Transverse colon (tissue), 4 donors: ENCODE measurements at regions of chr5 and their contacts with region 1.

Region 1: DNA sequence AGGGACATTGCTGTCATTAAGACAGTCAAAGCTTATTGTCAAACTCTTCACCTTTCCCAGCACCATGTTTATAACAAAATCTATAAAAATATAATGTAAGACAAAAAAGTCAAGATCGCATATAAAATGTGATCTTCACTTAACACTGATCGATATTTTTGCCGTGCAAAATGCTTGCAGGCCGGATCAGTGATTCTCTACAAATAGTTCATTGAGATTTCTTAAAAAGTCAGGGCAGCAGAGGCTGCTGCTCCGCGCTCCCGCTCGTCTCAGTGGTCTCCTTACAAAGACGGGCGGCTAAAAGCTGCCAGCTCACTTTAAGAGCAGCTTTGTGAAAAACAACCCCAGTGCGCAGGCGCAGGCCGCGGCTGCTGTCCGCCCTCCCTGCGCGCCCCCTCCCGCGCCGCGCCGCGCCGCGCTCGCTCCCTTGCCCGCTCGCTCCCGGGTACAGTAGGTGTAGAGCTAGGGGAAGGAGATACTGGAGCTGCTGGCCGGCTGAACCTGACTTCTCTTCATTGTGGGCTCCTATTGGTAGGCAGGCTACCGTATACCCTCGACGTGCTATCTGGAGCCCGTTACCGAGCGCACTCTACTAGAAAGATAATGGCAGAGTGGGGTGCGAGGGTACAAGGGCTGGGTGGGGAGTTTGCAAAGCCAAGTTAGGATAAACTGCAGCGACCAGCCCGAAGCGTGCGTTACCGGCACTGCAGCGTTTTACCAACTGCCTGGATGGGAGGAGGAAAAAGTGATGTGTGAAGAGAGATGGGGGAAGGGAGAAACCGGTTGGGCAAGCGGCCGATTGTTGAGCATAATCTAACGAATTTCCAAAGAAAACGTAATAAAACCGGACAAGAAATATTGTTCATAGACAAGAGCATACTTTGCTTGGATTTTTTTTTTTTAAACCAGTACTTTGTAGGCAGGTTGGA is at the start of gene ARRDC3:
- DNase-seq: peak; percentile 97
- H3K4me3 ChIP-seq: peak within 1 kb of the TSS; percentile 68 to 92 (median 75)
- H3K27ac ChIP-seq: peak within 1 kb of the TSS; percentile 97 to 99 (median 98)
- H3K4me1 ChIP-seq: peaks cover 5 to 23% (median 18%) of the 10 kb centered on the region in 4 donors
- H3K27me3 ChIP-seq: no peaks in the 10 kb centered on the region
- CTCF ChIP-seq: peak in 1 of 5 experiments; percentile 21
- EP300 ChIP-seq: peak; percentile 33
- POLR2A ChIP-seq: peak; percentile 99
- total RNA-seq, gene ARRDC3: 13.7 to 29.4 (median 27.5) TPM

Region 2: GRCh38 chr5:91101600-91102379 is 281.5 kb before region 1 on chr5:
- in situ Hi-C with region 1: loop called (anchors 5 to 25 kb)
- intact Hi-C with region 1: loop called (anchors 2 kb)
- DNase-seq: peak; percentile 75
- H3K4me3 ChIP-seq: no peak overlapping the region
- H3K27ac ChIP-seq: peak overlapping the region in 1 of 4 donors; percentile 20
- H3K4me1 ChIP-seq: peaks cover 0 to 28% (median 7%) of the 10 kb centered on the region in 4 donors
- H3K27me3 ChIP-seq: no peaks in the 10 kb centered on the region
- CTCF ChIP-seq: peak; percentile 73 to 92 (median 77)
- EP300 ChIP-seq: no peak
- POLR2A ChIP-seq: no peak

Region 3: DNA sequence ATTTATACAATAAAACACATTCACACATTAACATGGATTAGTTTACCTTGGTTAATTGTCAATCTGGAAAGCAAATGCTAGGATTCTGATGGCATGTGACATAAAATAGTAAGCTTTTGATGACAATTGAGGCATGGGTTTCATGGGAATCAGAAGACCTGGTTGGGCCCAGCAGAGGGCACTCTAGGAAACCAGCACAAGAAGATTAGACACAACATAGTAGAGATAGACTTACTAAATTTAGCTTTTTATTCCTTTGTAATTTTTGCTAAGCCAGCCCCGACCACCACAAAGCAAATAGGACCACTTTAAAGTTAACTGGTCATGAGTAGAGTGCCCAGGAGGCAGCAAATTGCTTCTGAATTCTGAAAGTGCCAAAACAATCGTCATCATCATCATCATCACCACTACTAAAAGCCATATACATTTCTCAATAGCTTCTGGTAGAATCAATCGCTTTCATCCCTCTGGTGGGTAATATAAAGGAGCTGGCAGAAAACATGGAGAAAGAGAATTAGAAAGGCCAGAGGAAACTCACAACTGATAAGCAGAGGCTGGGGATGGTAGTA is 163.4 kb before region 1 on chr5:
- in situ Hi-C with region 1: loop called in 3 of 4 experiments (anchors 10 to 25 kb)
- intact Hi-C with region 1: loop called (anchors 5 kb)
- DNase-seq: no peak
- H3K4me3 ChIP-seq: no peak overlapping the region
- H3K27ac ChIP-seq: peak overlapping the region in 1 of 4 donors; percentile 44
- H3K4me1 ChIP-seq: peaks cover 0 to 14% (median 4%) of the 10 kb centered on the region in 4 donors
- H3K27me3 ChIP-seq: no peaks in the 10 kb centered on the region
- CTCF ChIP-seq: peak in 1 of 5 experiments; percentile 17
- EP300 ChIP-seq: no peak
- POLR2A ChIP-seq: no peak

Region 4: DNA sequence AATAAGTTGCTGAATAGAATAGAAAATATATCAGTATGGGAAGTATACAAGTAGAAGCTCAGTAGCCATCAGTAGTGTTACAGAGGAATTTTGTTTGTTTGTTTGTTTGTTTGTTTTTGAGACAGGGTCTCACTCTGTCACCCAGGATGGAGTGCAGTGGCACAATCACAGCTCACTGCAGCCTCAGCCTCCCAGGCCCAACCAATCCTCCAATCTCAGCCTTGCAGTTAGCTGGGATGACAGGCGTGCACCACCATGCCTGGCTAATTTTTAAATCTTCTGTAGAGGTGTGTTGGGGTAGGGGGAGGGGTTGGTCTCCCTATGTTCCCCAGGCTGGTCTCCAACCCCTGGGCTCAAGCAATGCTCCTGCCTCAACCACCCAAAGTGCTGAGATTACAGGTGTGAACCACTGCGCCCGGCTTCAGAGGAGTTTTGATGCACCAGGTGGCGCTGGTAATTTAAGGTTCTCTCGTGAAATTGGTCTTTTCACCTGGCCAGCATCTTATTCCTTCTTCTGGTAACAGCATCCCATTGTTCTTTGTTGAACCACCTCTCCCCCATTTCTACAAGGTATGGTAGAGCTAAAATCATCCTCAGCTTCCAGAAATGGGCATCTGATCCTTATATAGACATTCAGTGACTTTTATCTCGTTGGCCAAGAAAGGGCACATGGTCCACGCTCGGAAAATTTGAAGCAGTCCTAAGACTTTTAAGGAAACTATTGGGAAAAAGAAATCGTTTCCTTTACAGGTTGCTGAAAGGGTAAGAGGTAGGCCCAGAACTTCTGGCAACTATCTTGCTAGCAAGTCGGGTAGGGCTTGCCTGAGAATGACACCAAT is 157.2 kb before region 1 on chr5:
- in situ Hi-C with region 1: loop called in 3 of 4 experiments (anchors 10 to 25 kb)
- intact Hi-C with region 1: loop called (anchors 5 kb)
- DNase-seq: peak; percentile 53
- H3K4me3 ChIP-seq: no peak overlapping the region
- H3K27ac ChIP-seq: no peak overlapping the region
- H3K4me1 ChIP-seq: no peaks in the 10 kb centered on the region
- H3K27me3 ChIP-seq: no peaks in the 10 kb centered on the region
- CTCF ChIP-seq: peak in 4 of 5 experiments; percentile 19 to 43 (median 41)
- EP300 ChIP-seq: no peak
- POLR2A ChIP-seq: no peak

Region 5: GRCh38 chr5:91280362-91281269 is 102.7 kb before region 1 on chr5:
- in situ Hi-C with region 1: loop called in 1 of 4 experiments (anchors 10 kb)
- intact Hi-C with region 1: no loop called
- DNase-seq: peak; percentile 92
- H3K4me3 ChIP-seq: peak overlapping the region; percentile 41 to 66 (median 46)
- H3K27ac ChIP-seq: peak overlapping the region; percentile 84 to 94 (median 90)
- H3K4me1 ChIP-seq: peaks cover 4 to 21% (median 12%) of the 10 kb centered on the region in 4 donors
- H3K27me3 ChIP-seq: no peaks in the 10 kb centered on the region
- CTCF ChIP-seq: no peak
- EP300 ChIP-seq: peak; percentile 75
- POLR2A ChIP-seq: peak; percentile 74

Region 6: GRCh38 chr5:91311697-91312501 is 71.4 kb before region 1 on chr5:
- in situ Hi-C with region 1: no loop called
- intact Hi-C with region 1: loop called (anchors 5 kb)
- DNase-seq: peak; percentile 61
- H3K4me3 ChIP-seq: no peak overlapping the region
- H3K27ac ChIP-seq: peak overlapping the region; percentile 70 to 84 (median 74)
- H3K4me1 ChIP-seq: peaks cover 10 to 37% (median 24%) of the 10 kb centered on the region in 4 donors
- H3K27me3 ChIP-seq: no peaks in the 10 kb centered on the region
- CTCF ChIP-seq: peak in 1 of 5 experiments; percentile 3
- EP300 ChIP-seq: peak; percentile 18
- POLR2A ChIP-seq: no peak